ENCODE measurements at regions of chr12 and their contacts with region 1.

Region 1: GRCh38 chr12:62210422-62210821 is 49.8 kb upstream of the USP15 start:
- DNase-seq: peak; percentile 50
- ATAC-seq: peak; percentile 49
- H3K4me3 Mint-ChIP-seq: no peak overlapping the region
- H3K27ac Mint-ChIP-seq: no peak overlapping the region
- H3K4me1 Mint-ChIP-seq: peaks cover 7% of the 10 kb centered on the region
- H3K27me3 Mint-ChIP-seq: peaks cover 19% of the 10 kb centered on the region

Region 2: DNA sequence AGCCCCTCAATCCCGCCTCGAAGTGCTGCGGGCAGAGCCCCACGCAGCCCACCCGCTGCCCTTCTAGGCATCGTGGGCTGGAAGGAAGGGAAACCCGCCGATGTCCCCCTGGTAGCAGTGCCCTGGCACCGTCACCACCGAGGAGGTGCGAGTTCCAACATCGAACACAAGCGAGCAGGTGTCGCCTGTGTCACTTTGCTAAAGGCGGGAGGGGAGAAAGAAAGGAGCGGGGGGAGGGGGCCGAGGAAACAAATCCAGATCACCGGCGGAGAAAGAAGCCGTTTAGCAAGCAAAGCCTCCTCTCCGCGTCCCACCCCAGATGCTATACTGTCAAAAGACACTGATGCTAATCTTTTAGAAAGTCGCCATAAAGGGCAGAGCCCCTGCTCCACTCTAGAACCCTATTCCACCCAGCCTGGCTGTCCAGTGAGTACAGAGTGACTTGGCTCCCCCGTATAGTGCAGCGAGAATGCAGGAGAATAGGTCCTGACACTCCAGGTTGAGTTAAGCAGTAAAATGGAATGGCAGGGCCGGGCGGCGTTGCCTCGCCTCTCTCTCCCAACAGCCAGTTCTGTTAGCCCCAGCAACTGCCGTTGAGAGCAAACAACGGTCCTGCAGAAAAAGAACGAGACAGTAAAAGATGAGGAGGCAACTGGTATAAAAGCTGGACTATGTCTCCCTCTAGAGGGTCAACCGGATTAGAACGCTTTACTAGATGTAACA is 18.1 kb before region 1 on chr12:
- CTCF ChIA-PET with region 1: interaction called, 16 read pairs
- DNase-seq: peak; percentile 64
- ATAC-seq: peak; percentile 91
- H3K4me3 Mint-ChIP-seq: peak overlapping the region; percentile 66
- H3K27ac Mint-ChIP-seq: no peak overlapping the region
- H3K4me1 Mint-ChIP-seq: peaks cover 24% of the 10 kb centered on the region
- H3K27me3 Mint-ChIP-seq: peaks cover 65% of the 10 kb centered on the region

Measured in activated CD8-positive, alpha-beta memory T cell treated with anti-CD3 and anti-CD28 coated beads, Interleukin-2, amount 10 ng/mL, durations not matched to agents 7 days and 5 days (primary cell).